ENCODE measurements at regions of chr6 and their contacts with region 1.

Region 1: GRCh38 chr6:129730477-129731165 is 20.6 kb upstream of the ARHGAP18 start:
- DNase-seq: no peak
- H3K4me3 ChIP-seq: no peak overlapping the region
- H3K27ac ChIP-seq: no peak overlapping the region
- H3K4me1 ChIP-seq: no peaks in the 10 kb centered on the region
- H3K27me3 ChIP-seq: no peaks in the 10 kb centered on the region
- CTCF ChIP-seq: peak in 2 of 3 donors; percentile 62 to 68
- EP300 ChIP-seq: no peak
- POLR2A ChIP-seq: no peak

Region 2: GRCh38 chr6:129621247-129621646 is 109.4 kb before region 1 on chr6:
- intact Hi-C with region 1: loop called in 2 of 4 experiments (anchors 10 kb)
- DNase-seq: no peak
- H3K4me3 ChIP-seq: no peak overlapping the region
- H3K27ac ChIP-seq: no peak overlapping the region
- H3K4me1 ChIP-seq: no peaks in the 10 kb centered on the region
- H3K27me3 ChIP-seq: no peaks in the 10 kb centered on the region
- CTCF ChIP-seq: no peak
- EP300 ChIP-seq: no peak
- POLR2A ChIP-seq: no peak